ENCODE measurements at regions of chr19 and their contacts with region 1.

Region 1: GRCh38 chr19:35468637-35469036 is 20.6 kb downstream of the FFAR2 start:
- DNase-seq: peak; percentile 77
- ATAC-seq: peak; percentile 98
- H3K4me3 Mint-ChIP-seq: no peak overlapping the region
- H3K27ac Mint-ChIP-seq: no peak overlapping the region
- H3K4me1 Mint-ChIP-seq: peaks cover 12% of the 10 kb centered on the region
- H3K27me3 Mint-ChIP-seq: peaks cover 12% of the 10 kb centered on the region

Region 2: DNA sequence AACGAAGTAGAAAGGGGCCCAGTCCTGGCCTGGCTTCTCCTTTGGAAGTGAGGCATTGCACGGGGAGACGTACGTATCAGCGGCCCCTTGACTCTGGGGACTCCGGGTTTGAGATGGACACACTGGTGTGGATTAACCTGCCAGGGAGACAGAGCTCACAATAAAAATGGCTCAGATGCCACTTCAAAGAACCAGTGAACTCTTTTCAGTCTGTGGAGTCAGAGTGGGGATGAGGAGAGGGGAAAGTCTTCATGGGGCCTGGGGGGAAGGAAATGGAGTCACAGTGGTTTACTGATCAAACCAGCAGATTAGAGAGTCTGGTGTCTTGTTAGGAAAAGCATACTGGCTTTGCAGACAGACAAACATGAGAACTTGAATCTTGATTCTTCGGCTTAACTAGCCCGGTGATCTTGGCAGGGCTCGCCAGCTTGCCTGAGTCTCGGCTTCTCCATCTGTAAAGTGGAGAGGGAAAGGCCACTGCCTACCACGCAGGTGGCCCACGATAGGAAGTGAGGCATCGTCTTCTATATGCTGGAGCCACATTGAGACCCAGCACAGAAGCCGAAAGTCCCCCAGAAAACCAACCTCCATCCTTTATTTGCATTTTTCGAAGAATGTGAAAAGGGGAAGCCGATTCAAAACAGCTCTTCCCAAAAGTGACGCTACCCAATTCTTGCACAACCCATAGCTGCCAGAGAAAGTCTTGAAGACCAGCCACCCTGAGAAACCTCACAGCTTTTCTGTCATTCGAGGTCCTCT is 121.3 kb before region 1 on chr19 and contains the start of gene FFAR1:
- CTCF ChIA-PET with region 1: interaction called, 73 read pairs
- POLR2A ChIA-PET with region 1: interaction called, 5 read pairs
- DNase-seq: peak; percentile 55
- ATAC-seq: peak; percentile 70
- H3K4me3 Mint-ChIP-seq: peak within 1 kb of the TSS; percentile 51
- H3K27ac Mint-ChIP-seq: peak within 1 kb of the TSS; percentile 50
- H3K4me1 Mint-ChIP-seq: peaks cover 31% of the 10 kb centered on the region
- H3K27me3 Mint-ChIP-seq: peaks cover 10% of the 10 kb centered on the region
- total RNA-seq, gene FFAR1: not detected

Region 3: DNA sequence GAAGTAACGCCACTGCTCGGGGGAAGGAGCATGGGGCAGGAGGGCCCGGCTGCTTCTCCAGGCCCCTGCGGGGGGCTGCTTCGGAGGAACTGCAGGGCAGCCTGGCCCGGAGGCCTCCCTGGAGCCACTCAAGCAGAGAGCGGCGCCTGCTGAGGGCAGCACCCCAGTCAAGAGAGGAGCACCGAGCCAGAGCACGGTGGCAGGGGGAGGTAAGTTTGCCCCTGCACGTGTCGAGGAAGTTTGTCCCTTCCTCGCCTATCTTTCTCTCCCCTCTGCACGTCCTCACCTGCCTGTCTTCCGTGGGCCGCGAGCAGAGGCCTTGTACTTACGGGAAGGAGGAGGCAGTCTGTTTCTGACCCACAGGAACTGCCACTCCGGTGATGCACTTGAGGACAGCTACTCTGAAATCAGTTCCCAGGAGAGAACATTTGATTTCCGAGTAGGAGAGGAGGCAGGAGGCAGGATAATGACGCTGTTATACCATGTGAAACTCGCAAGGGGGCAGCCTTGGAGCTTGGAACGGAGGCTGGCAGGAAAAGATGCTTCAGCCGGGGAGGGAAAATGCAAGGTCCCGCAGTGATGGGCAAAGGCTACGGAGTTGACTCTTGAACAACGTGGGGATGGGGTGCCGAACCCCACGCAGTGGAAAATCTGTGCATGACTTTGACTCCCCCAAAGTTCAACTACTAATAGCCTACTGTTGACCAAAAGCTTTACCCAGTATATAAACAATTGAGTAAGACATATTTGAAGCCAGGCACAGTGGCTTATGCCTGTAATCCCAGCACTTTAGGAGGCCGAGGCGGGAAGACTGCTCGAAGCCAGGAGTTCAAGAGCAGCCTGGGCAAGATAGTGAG is 116.0 kb before region 1 on chr19:
- CTCF ChIA-PET with region 1: interaction called, 73 read pairs
- POLR2A ChIA-PET with region 1: interaction called, 5 read pairs
- DNase-seq: peak; percentile 83
- ATAC-seq: peak; percentile 74
- H3K4me3 Mint-ChIP-seq: no peak overlapping the region
- H3K27ac Mint-ChIP-seq: no peak overlapping the region
- H3K4me1 Mint-ChIP-seq: peaks cover 17% of the 10 kb centered on the region
- H3K27me3 Mint-ChIP-seq: peaks cover 3% of the 10 kb centered on the region

Region 4: GRCh38 chr19:35484252-35485036 is 15.8 kb after region 1 on chr19:
- CTCF ChIA-PET with region 1: interaction called, 12 read pairs
- POLR2A ChIA-PET with region 1: no interaction called
- DNase-seq: no peak
- ATAC-seq: no peak
- H3K4me3 Mint-ChIP-seq: no peak overlapping the region
- H3K27ac Mint-ChIP-seq: no peak overlapping the region
- H3K4me1 Mint-ChIP-seq: no peaks in the 10 kb centered on the region
- H3K27me3 Mint-ChIP-seq: peaks cover 14% of the 10 kb centered on the region